BJ (cell line): ENCODE measurements at regions of chr14 and their contacts with region 1.

Region 1: DNA sequence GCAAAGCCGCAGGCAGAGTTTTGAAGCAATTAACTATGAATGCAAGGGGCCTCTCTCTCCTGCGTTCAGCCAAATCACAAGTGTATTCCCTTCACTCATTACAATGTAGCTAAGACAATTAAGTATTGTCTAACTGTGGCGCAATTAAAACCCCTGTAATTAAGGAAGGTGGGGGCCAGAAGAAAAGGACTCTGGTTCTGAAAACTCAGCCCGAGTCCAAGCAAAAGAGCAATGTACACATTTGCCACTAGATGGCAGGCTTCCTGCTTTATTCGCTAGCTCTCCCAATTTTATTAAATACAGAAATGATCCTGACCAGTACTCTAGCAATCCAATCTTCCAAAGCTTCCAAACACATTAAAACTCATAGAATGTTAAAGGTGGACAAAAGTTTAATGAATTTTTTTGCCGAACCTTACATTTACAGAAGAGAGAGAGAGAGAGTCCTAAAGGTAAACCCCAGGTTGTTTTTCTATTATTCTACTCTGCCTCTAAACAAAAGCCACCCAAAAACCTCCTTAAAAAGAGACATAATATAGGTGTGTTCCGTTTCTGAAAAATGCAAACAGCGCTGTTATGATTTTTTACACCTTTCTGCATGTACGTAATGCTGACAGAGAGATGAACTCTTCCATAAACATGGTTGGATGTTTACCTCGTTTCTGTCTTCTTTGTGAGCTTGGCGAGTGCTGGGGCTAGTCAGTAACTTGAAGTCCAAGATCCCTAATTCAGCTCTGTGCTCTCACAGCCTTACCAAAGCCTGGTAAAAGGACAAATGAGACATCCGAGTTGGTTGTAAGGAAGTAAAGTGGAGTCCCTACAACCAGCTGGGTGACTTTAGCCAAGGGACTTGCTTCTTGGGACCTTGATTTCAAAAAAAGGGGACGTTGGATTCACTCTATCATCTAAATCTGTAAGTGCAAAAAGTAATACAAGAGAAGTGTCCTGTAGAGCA is 50.9 kb upstream of the VASH1 start:
- DNase-seq: peak; percentile 9
- H3K4me3 ChIP-seq: no peak overlapping the region
- H3K27me3 ChIP-seq: no peaks in the 10 kb centered on the region; the same call in 1 of the 2 replicates
- CTCF ChIP-seq: peak; percentile 72

Region 2: DNA sequence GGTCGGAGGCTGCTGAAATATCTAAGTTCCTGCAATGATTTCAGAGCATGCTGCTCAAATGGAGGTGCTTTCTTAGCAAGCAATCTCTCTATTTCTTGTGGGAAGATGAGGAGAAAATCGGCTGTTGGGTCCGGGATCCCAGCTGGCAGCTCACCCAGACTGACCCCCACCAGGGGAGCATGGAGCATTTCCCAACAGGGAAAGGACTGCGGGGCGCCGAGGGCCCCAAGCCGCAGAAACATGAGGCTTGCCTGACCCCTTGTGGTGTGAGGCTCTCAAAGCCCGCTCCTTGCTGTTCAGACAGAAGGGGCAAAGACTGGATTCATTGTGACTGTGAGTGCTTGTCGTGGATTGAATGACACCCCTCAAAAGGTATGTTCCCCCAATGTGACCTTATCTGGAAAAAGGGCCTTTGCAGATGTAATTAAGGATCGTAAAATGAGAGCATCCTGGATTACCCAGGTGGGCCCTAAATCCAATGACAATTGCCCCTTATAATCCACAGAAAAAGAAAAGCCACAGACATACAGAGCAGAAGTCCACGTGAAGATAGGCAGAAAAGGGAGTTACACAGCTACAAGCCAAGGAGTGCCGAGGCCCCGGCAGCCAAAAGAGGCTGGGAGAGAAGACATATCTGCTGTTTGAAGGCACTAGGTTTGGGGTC is 65.3 kb before region 1 on chr14:
- CTCF ChIA-PET with region 1: no interaction called
- POLR2A ChIA-PET with region 1: no interaction called
- DNase-seq: no peak
- H3K4me3 ChIP-seq: no peak overlapping the region
- H3K27me3 ChIP-seq: peaks cover 3% of the 10 kb centered on the region; the same call in 1 of the 2 replicates
- CTCF ChIP-seq: peak; percentile 47

Region 3: GRCh38 chr14:76682367-76682766 is 28.0 kb before region 1 on chr14:
- CTCF ChIA-PET with region 1: no interaction called
- POLR2A ChIA-PET with region 1: no interaction called
- DNase-seq: no peak
- H3K4me3 ChIP-seq: no peak overlapping the region
- H3K27me3 ChIP-seq: no peaks in the 10 kb centered on the region
- CTCF ChIP-seq: no peak

Region 4: DNA sequence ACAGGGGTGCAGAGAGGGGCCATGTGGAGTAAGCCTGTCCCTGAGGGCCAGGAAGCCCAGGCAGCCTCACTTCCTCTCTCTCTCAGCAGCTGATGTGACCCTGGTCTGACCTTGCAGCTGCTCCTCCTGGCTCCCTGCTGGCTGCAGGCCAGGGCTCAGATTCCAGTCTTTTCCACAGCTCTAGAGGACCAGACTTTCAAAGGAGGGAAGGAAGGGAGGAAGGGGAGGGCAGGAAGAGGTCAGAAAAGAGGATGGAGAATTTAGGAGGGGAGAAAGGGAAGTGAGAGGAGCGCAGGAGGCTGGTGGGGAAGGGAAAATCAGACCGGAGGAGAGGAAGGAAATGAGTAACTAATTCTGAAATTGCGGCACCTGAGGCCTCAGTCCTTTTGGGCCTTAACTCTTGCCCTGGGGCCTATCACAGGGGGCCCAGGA is 10.1 kb after region 1 on chr14:
- CTCF ChIA-PET with region 1: interaction called, 32 read pairs
- POLR2A ChIA-PET with region 1: no interaction called
- DNase-seq: no peak
- H3K4me3 ChIP-seq: no peak overlapping the region
- H3K27me3 ChIP-seq: peaks cover 8% of the 10 kb centered on the region
- CTCF ChIP-seq: no peak

Region 5: DNA sequence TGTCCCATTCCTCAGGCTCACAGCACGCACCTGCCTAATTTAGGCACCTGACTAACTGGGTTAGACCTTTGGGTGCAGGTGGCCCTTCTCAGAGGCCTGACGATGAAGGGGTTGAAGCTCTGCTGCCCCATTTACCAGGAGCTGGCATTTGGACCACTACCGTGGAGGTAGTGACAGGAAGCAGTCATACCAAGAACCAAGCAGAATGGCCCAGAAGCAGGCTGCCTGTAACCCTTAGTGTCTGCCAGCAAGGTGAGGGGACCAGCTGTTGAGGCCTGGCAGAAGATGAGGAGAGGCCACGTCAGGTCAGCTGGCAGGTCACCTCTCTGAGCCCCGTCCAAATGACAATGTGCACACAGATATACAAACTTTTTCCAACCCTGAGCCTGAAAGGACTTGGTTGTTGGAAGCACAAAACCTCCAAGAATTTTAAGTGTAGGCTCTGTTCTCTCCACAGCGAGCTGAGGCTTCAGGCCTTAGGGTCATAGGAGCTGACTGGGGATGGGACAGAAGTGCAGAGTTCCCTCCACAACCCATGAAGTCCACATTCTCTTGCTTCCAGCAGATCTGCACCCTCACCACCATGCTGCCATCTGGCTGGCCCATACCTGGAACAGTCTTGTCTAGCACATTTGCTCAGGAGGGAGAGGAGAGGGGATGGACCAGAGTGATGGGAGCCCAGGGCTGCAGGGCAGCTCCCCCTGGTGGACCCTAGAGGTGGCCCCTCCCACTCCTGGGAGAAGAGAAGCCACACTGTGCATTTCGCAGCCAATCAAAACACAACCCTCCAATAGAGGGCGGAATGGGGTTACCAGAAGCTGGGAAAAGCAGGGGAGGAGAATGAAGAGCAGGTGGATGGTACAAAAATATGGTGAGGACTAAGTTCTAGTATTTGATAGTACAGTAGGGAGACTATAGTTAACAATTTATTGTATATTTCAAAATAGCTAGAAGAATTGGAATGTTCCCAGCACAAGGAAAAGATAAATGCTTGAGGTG is 74.2 kb after region 1 on chr14:
- CTCF ChIA-PET with region 1: interaction called, 197 read pairs
- POLR2A ChIA-PET with region 1: no interaction called
- DNase-seq: no peak
- H3K4me3 ChIP-seq: no peak overlapping the region
- H3K27me3 ChIP-seq: no peaks in the 10 kb centered on the region
- CTCF ChIP-seq: peak; percentile 92

Region 6: GRCh38 chr14:76806446-76806845 is 96.1 kb after region 1 on chr14:
- CTCF ChIA-PET with region 1: interaction called, 34 read pairs
- POLR2A ChIA-PET with region 1: no interaction called
- DNase-seq: no peak
- H3K4me3 ChIP-seq: no peak overlapping the region
- H3K27me3 ChIP-seq: no peaks in the 10 kb centered on the region
- CTCF ChIP-seq: no peak

Region 7: GRCh38 chr14:76812211-76813044 is 102.1 kb after region 1 on chr14 and contains the start of gene ANGEL1:
- CTCF ChIA-PET with region 1: interaction called, 34 read pairs
- POLR2A ChIA-PET with region 1: no interaction called
- DNase-seq: peak; percentile 23
- H3K4me3 ChIP-seq: peak within 1 kb of the TSS; percentile 80
- H3K27me3 ChIP-seq: peaks cover 2% of the 10 kb centered on the region; the same call in 1 of the 2 replicates
- CTCF ChIP-seq: no peak
- polyA plus RNA-seq, gene ANGEL1: 14.0 and 16.8 TPM in 2 replicates

Region 8: DNA sequence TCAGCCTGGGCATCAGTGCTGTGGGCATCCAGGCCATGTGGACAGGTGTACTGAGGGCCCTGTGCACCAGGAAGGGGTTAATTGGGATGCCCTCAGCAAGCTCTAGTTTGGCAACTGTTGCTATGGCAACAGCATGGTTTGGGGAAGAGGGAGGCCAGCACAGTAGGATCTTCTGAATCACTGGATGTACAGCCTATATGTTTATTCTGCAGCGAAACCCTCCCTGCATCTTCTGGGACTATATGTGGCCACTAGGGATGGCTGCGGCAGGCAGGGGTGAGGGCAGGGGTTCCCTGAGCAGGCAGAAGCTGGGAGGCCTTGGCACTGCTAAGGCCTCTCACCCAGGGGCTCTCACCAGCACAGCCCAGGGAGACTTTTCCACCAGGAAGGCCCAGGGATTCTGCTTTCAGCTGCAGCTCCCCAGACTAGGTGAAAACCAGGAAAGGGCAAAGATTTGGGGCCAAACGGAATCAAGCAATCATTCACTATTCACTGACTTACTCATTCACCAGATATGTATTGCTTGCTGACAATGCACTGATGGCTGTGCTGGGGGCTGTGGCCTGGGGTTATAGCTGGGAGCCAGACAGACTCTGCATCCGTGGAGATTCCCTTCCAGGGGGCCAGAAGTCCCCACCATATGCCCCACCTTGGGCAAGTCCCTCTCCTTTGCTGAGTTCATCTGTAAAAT is 275.4 kb after region 1 on chr14:
- CTCF ChIA-PET with region 1: no interaction called
- POLR2A ChIA-PET with region 1: no interaction called
- DNase-seq: no peak
- H3K4me3 ChIP-seq: no peak overlapping the region
- H3K27me3 ChIP-seq: no peaks in the 10 kb centered on the region
- CTCF ChIP-seq: no peak